Activated T-helper 1 cell treated with anti-CD3 and anti-CD28 coated beads, Interleukin-12 subunit alpha, Interleukin-12 subunit beta, Interleukin-2, Interleukin-4 antibody, amounts not matched to agents 30 ng/mL and 10 ng/mL and 1 ng/mL, durations not matched to agents 14 hours and 24 hours and 36 hours (primary cell): ENCODE measurements at regions of chr18 and their contacts with region 1.

Region 1: DNA sequence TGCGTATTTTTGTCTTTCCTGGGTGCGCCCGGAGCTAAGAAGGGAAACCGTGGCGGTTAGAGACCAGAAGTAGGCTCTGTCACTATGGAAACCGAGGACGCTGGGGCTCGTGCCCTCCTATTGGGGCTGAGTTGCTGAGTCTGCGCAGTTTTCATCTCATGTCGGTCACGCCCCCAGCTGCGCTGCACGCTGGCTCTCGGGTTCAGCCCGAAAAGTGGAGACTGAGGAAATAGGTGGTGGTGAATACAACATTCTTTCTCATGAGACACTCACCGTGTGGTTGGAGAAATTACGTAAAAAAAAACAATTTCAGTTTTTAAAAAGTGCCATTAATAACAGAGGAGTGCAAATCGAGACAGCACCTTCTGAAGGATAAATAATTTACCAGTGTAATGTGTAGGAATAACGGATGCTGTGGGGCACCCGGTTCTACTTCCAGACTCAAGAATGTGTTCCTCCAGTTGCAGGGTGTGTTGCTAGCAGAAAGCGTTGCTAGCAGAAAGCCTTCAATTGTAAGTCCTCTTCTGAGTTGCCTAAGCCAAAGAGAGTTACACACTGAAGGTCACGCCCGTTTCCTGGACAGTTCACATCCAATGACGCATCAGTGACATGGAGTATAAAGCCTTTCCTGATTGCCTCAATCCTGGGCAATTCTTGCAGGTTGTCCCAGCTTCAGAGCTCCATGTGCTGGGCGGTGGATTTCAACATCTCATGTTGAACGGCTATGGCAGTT is 20.4 kb upstream of the CXXC1 start:
- DNase-seq: peak; percentile 85
- H3K4me3 Mint-ChIP-seq: peak overlapping the region; percentile 90
- H3K27ac Mint-ChIP-seq: peak overlapping the region; percentile 57
- H3K4me1 Mint-ChIP-seq: peaks cover 18% of the 10 kb centered on the region
- H3K27me3 Mint-ChIP-seq: peaks cover 27% of the 10 kb centered on the region

Region 2: DNA sequence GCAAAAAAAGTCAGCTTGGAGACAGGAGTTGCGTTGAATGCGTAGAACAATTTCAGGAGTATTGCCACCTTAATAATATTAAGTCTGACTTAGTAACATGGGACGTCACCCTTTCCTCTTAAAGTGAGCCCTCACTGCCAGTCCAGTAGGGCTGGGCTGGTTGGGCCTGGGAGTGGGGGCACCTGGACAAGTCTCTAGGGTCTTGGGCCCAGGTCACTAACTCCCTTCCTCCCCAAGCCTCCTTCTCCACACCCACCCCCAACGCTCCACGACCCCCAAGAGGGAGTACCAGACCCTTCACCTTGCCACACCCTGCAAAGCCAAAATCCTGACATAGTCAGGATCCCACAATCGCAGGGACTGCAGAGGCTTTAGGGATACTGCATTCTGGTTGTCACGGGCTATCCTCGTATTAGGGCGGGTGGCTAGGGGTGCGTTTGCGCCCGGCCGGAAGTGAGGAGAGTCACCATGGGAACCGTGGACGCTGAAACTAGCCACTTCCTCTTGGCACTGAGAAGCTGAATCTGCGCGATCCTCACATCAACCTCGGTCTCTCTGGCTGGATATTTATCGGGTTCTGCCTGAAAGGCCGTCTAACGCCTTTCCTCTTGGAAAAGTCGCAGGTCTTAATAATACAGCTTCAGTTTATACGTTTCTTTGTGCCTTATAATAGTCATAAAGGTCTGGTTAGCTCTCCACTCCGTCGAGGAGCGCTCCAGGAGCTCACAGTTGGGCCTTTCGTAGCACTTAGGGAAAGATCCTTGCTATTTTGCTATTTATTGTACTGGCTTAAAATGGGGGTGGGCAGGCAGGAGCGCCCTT is 10.1 kb before region 1 on chr18:
- intact Hi-C with region 1: loop called (anchors 1 kb)
- DNase-seq: peak; percentile 59
- H3K4me3 Mint-ChIP-seq: peak overlapping the region; percentile 74
- H3K27ac Mint-ChIP-seq: no peak overlapping the region
- H3K4me1 Mint-ChIP-seq: peaks cover 15% of the 10 kb centered on the region
- H3K27me3 Mint-ChIP-seq: peaks cover 24% of the 10 kb centered on the region

Region 3: GRCh38 chr18:50374753-50375391 is 67.0 kb after region 1 on chr18 and contains the start of gene SKA1:
- intact Hi-C with region 1: loop called (anchors 1 kb)
- DNase-seq: peak; percentile 89
- H3K4me3 Mint-ChIP-seq: peak within 1 kb of the TSS; percentile 91
- H3K27ac Mint-ChIP-seq: peak within 1 kb of the TSS; percentile 81
- H3K4me1 Mint-ChIP-seq: peaks cover 23% of the 10 kb centered on the region
- H3K27me3 Mint-ChIP-seq: peaks cover 2% of the 10 kb centered on the region
- total RNA-seq, gene SKA1: 20.7 and 23.3 TPM in 2 replicates